HepG2 (cell line): ENCODE measurements at regions of chr9 and their contacts with region 1.

Region 1: DNA sequence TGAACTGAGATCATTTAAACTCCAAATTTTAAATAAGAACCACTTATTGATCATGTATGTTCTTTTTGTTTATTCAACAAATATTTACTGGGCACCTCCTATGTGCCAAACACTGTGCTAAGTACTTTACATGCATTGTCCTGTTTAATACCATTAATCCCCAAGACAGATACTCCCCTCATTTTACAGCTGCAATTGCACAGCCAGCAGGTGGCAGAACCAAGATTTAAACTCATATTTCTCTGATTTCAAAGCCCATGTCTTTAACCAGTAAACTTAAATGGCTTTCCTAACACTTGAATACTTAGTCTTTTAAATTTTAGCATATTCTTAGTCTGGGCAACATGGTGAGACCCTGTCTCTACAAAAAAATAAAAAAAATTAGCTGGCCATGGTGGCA is 43.4 kb upstream of the KIAA1958 start:
- DNase-seq: peak; percentile 16
- ATAC-seq: peak; percentile 42; the same call in 1 of the 3 replicates
- H3K4me3 ChIP-seq: no peak overlapping the region
- H3K27ac ChIP-seq: no peak overlapping the region
- H3K4me1 ChIP-seq: peaks cover 10% of the 10 kb centered on the region; the same call in 1 of the 2 replicates
- H3K27me3 ChIP-seq: no peaks in the 10 kb centered on the region
- CTCF ChIP-seq: peak; percentile 41
- EP300 ChIP-seq: no peak
- POLR2A ChIP-seq: no peak
- RAD21 ChIP-seq: no peak

Region 2: DNA sequence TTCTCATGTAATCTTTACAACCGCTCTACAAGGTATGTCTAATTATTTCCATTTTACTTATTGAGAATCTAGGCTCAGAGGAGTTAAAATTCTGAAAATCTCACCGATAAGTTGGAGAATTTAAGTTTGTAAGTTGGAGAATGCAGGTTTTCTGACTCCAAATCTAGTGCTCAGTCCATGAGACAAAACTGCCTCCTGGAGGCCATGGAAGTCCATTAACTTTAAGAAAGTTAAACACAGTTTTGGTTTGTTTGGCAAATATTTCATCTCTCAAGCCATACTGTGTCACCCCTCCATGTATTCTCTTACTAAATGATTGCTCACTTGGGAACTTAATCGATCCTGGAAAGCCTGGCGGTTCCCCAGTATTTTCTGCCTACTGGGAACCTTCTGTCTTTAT is 222.1 kb after region 1 on chr9:
- CTCF ChIA-PET with region 1: interaction called, 3 read pairs
- POLR2A ChIA-PET with region 1: no interaction called
- in situ Hi-C with region 1: no loop called
- intact Hi-C with region 1: loop called (anchors 1 kb)
- DNase-seq: no peak
- ATAC-seq: no peak
- H3K4me3 ChIP-seq: no peak overlapping the region
- H3K27ac ChIP-seq: no peak overlapping the region
- H3K4me1 ChIP-seq: no peaks in the 10 kb centered on the region
- H3K27me3 ChIP-seq: no peaks in the 10 kb centered on the region
- CTCF ChIP-seq: peak; percentile 51
- EP300 ChIP-seq: no peak
- POLR2A ChIP-seq: no peak
- RAD21 ChIP-seq: no peak

Region 3: DNA sequence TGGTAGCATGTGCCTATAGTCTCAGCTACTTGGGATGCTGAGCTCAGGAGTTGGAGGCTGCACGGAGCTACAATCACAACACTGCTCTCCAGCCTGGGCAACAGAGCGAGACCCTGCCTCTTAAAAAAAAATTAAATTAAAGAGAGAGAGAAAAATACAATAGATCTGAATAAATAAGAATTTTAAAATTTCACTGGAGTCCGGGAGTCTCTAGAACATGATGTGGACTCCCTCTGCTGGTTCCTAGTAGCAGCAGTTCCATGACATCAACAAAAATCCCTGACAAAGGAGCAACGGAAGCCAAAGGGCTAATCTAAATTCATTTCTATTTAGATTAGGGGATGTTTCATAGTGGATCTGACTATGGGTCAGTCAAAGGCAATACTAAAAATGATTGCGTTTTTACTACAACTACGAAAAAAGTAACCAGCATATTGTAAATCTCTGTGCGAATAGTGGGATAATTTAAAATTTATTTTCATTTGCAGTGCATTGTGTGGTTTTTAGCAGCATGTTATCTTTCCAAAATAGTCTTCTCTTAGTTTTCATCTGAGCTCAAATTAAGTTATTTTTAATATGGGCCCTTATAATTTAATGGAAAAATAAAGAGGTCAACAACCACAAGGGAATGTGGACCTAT is 268.0 kb after region 1 on chr9:
- CTCF ChIA-PET with region 1: interaction called, 4 read pairs
- POLR2A ChIA-PET with region 1: no interaction called
- in situ Hi-C with region 1: no loop called
- intact Hi-C with region 1: loop called (anchors 5 kb)
- DNase-seq: peak; percentile 44
- ATAC-seq: no peak; the same call in 2 of the 3 replicates
- H3K4me3 ChIP-seq: no peak overlapping the region
- H3K27ac ChIP-seq: no peak overlapping the region
- H3K4me1 ChIP-seq: peaks cover 8% of the 10 kb centered on the region
- H3K27me3 ChIP-seq: no peaks in the 10 kb centered on the region
- CTCF ChIP-seq: peak; percentile 54
- EP300 ChIP-seq: no peak
- POLR2A ChIP-seq: no peak
- RAD21 ChIP-seq: no peak